Right cardiac atrium (tissue), 5 donors: ENCODE measurements at regions of chr9 and their contacts with region 1.

Region 1: GRCh38 chr9:2620919-2621679 is 488 bp upstream of the VLDLR start:
- DNase-seq: peak; percentile 85 to 94 (median 93)
- ATAC-seq: peak; percentile 82 to 87
- H3K4me3 ChIP-seq: peak overlapping the region; percentile 79
- H3K27ac ChIP-seq: peak overlapping the region; percentile 48
- H3K4me1 ChIP-seq: peaks cover 3% of the 10 kb centered on the region
- H3K27me3 ChIP-seq: no peaks in the 10 kb centered on the region

Region 2: GRCh38 chr9:2494562-2494961 is 126.5 kb before region 1 on chr9:
- intact Hi-C with region 1: loop called in 1 of 4 experiments (anchors 10 kb)
- DNase-seq: no peak
- ATAC-seq: peak; percentile 33 to 60
- H3K4me3 ChIP-seq: no peak overlapping the region
- H3K27ac ChIP-seq: peak overlapping the region; percentile 13
- H3K4me1 ChIP-seq: peaks cover 7% of the 10 kb centered on the region
- H3K27me3 ChIP-seq: no peaks in the 10 kb centered on the region

Region 3: GRCh38 chr9:2570615-2571479 is 50.3 kb before region 1 on chr9:
- intact Hi-C with region 1: loop called in 2 of 4 experiments (anchors 5 kb)
- DNase-seq: peak; percentile 93 to 95 (median 95)
- ATAC-seq: peak; percentile 95
- H3K4me3 ChIP-seq: no peak overlapping the region
- H3K27ac ChIP-seq: peak overlapping the region; percentile 90
- H3K4me1 ChIP-seq: peaks cover 14% of the 10 kb centered on the region
- H3K27me3 ChIP-seq: no peaks in the 10 kb centered on the region

Region 4: DNA sequence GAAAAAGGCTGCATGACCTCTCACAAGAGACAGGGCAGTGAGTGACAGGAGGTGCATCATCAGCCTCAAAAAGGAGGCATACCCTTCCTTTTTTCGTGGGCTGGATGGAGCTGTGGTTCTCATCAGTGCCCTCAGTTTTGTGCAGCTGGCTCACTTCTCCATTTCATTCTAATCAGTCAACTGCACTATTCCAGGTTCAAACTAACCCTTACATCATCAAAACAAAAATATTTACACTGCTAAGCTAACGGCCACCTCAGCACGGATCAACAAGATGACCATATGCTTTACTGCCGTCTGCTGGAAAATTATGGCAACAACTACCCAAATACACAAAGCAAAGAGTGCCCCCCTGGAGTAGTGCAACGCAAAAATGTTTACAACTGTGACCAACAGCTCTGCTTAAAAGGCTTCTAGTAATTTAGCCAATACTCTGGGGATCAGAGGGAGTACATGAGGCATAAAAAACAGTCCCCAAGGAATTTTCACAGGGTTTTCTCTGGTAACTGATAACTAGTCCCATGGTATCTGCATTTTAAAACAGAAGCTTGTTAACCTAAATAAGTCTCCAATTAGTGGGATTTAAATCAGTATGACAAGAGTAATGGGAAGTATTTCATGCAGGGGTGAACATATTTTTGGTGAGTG is 107.0 kb after region 1 on chr9:
- intact Hi-C with region 1: loop called in 1 of 4 experiments (anchors 10 kb)
- DNase-seq: no peak
- ATAC-seq: peak; percentile 66 to 81
- H3K4me3 ChIP-seq: no peak overlapping the region
- H3K27ac ChIP-seq: no peak overlapping the region
- H3K4me1 ChIP-seq: no peaks in the 10 kb centered on the region
- H3K27me3 ChIP-seq: no peaks in the 10 kb centered on the region

Region 5: GRCh38 chr9:2833096-2833495 is 212.0 kb after region 1 on chr9:
- intact Hi-C with region 1: no loop called
- DNase-seq: no peak
- ATAC-seq: no peak
- H3K4me3 ChIP-seq: no peak overlapping the region
- H3K27ac ChIP-seq: no peak overlapping the region
- H3K4me1 ChIP-seq: no peaks in the 10 kb centered on the region
- H3K27me3 ChIP-seq: no peaks in the 10 kb centered on the region